Psoas muscle (tissue), 8 donors: ENCODE measurements at regions of chr16 and their contacts with region 1.

Region 1: DNA sequence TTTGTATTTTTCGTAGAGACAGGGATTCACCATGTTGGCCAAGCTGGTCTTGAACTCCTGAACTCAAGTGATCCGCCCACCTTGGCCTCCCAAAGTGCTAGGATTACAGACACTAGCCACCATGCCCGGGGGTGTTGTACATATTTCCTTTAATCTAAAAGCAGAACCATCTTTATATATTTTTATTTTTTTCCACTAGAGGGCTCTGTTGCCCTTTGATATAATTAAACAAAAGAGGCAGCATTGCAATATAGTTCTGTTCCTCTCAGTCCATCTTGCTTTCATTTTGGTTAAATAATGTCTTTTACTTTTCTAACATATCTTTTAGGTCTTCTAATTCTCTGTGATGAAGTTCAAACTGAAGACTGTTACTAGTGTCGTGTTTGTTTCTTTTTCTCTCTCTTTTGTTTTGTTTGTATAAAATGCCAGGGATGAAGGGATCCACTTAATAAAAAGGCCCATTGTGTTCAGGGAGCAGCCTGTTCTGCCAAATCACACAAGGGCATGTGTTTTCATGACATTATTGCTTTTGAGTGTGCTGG is 23.4 kb downstream of the WWOX start:
- DNase-seq: peak in 1 of 2 donors; percentile 19
- ATAC-seq: peak; percentile 53 to 89 (median 64)
- H3K4me3 ChIP-seq: no peak overlapping the region
- H3K27ac ChIP-seq: no peak overlapping the region
- H3K4me1 ChIP-seq: peaks cover 10% of the 10 kb centered on the region
- H3K27me3 ChIP-seq: no peaks in the 10 kb centered on the region
- CTCF ChIP-seq: peak; percentile 61

Region 2: GRCh38 chr16:77387815-77388209 is 735.0 kb before region 1 on chr16:
- intact Hi-C with region 1: no loop called
- DNase-seq: no peak
- ATAC-seq: no peak
- H3K4me3 ChIP-seq: no peak overlapping the region
- H3K27ac ChIP-seq: no peak overlapping the region
- H3K4me1 ChIP-seq: no peaks in the 10 kb centered on the region
- H3K27me3 ChIP-seq: no peaks in the 10 kb centered on the region
- CTCF ChIP-seq: no peak

Region 3: DNA sequence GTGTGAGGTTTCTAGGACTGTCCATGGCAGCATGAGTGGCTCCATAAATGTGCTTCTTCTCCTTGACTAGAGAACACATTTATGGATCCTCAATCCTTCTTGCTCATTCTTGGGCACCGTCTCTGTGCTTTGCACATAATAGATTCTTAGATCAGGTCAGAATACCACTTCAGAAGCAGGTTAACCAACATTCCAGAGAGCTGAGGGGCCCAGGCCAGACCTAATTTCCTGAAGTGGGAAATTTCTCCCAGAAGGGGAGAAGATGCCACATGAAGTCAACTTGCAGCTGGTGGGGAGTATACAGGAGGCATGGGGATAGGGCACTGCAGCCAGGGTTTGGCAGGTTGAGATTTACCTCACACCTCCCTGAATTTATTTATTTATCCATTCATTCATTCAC is 358.9 kb before region 1 on chr16:
- intact Hi-C with region 1: no loop called
- DNase-seq: no peak
- ATAC-seq: no peak
- H3K4me3 ChIP-seq: no peak overlapping the region
- H3K27ac ChIP-seq: no peak overlapping the region
- H3K4me1 ChIP-seq: no peaks in the 10 kb centered on the region
- H3K27me3 ChIP-seq: no peaks in the 10 kb centered on the region
- CTCF ChIP-seq: no peak

Region 4: DNA sequence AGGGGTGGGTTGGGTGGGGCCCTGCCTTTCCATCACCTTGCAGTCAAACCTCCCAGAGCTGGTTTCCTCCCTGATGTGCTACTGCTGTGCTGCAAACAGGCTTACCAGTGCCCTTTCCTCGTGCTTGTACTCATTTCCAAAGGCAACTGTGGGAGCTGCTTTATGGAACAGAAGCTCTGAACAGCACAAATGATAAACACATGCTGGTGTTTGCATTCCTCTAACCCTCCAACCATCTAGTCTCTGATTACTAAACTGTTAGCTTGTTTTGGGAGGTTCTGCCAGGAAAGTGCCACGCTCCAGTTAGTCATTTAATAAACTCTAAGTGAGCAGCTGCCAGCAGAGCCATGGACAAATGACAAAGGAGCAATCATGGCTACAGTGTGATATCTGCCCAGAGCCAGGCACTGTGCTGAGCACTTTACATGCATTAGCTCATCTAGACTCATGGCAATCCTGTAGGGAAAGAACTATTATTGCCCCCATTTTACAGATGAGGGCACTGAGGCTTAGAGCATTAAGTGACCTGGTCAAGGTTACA is 224.1 kb before region 1 on chr16:
- intact Hi-C with region 1: no loop called
- DNase-seq: no peak
- ATAC-seq: no peak
- H3K4me3 ChIP-seq: no peak overlapping the region
- H3K27ac ChIP-seq: no peak overlapping the region
- H3K4me1 ChIP-seq: no peaks in the 10 kb centered on the region
- H3K27me3 ChIP-seq: no peaks in the 10 kb centered on the region
- CTCF ChIP-seq: no peak

Region 5: DNA sequence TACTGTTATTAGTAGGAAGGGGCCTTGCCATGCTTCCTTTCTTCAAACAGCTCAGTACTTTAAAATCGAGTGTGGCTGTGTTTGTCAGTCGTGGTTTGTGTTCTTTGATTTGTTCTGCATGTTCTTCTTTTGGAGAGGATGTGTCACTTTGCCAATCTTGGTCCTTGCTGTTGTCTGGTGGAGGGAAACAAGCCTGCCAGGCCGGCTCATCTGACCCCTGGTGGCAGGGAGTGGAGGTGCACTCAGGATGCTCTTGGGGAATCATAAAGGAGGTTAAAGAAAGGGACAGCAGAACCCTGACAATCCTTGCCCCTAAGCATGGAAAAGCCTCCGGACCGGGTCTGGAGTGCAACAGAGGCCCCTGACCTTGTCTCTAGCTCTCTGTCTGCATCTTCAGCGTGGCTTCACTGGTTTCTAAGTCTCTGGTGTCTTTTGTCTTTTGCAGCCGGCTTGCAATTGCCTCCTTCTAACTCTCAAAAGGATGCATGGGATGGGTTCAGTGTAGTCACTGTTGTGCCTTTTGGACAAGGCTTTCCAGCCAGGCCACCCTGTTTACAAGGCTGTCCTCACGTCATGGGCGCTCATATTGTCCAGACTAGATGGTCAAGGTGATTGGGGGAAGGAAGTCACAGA is 112.4 kb after region 1 on chr16:
- intact Hi-C with region 1: loop called in 1 of 2 experiments (anchors 5 kb)
- DNase-seq: peak; percentile 51 to 60
- ATAC-seq: peak in 2 of 4 donors; percentile 48 to 61
- H3K4me3 ChIP-seq: no peak overlapping the region
- H3K27ac ChIP-seq: no peak overlapping the region
- H3K4me1 ChIP-seq: no peaks in the 10 kb centered on the region
- H3K27me3 ChIP-seq: no peaks in the 10 kb centered on the region
- CTCF ChIP-seq: peak; percentile 71

Region 6: DNA sequence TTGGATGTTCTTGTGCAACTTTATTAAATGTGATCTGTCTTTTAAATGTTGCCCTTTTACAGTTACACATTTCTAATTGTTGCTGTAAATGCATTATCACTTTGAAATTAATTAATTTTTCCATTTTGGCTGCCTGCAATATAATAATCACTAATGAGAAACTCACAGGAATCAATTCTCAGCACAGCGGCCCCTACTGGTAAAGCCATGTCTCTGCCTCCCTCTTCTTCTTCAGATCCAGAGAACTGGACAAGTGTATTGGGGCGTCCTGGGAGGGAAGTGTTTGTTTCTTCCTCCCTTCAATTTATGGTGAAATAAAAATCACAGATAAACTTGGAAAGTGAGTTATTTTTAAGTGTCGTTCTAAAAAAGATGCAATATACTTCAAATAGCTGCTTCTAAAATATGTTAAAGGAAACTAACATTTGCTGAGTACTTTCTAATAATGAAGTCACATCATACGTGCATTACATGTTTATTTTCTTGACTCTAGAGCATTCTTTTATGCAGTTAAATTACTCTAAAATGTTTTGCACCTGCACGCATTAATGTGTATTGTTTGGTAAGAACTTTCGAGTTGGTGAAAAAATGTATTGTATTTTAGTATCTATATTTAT is 314.6 kb after region 1 on chr16:
- intact Hi-C with region 1: loop called (anchors 5 kb)
- DNase-seq: no peak
- ATAC-seq: no peak
- H3K4me3 ChIP-seq: no peak overlapping the region
- H3K27ac ChIP-seq: no peak overlapping the region
- H3K4me1 ChIP-seq: no peaks in the 10 kb centered on the region
- H3K27me3 ChIP-seq: no peaks in the 10 kb centered on the region
- CTCF ChIP-seq: peak; percentile 77

Region 7: GRCh38 chr16:78443542-78444364 is 320.9 kb after region 1 on chr16:
- intact Hi-C with region 1: loop called (anchors 5 kb)
- DNase-seq: no peak
- ATAC-seq: no peak
- H3K4me3 ChIP-seq: peak overlapping the region; percentile 7
- H3K27ac ChIP-seq: no peak overlapping the region
- H3K4me1 ChIP-seq: no peaks in the 10 kb centered on the region
- H3K27me3 ChIP-seq: no peaks in the 10 kb centered on the region
- CTCF ChIP-seq: no peak

Region 8: GRCh38 chr16:78461496-78462191 is 338.8 kb after region 1 on chr16:
- intact Hi-C with region 1: no loop called
- DNase-seq: no peak
- ATAC-seq: no peak
- H3K4me3 ChIP-seq: no peak overlapping the region
- H3K27ac ChIP-seq: no peak overlapping the region
- H3K4me1 ChIP-seq: no peaks in the 10 kb centered on the region
- H3K27me3 ChIP-seq: no peaks in the 10 kb centered on the region
- CTCF ChIP-seq: no peak

Region 9: GRCh38 chr16:78490847-78491246 is 368.0 kb after region 1 on chr16:
- intact Hi-C with region 1: loop called in 1 of 2 experiments (anchors 10 kb)
- DNase-seq: peak; percentile 56 to 84
- ATAC-seq: peak; percentile 97 to 99 (median 99)
- H3K4me3 ChIP-seq: peak overlapping the region; percentile 48
- H3K27ac ChIP-seq: peak overlapping the region; percentile 70
- H3K4me1 ChIP-seq: no peaks in the 10 kb centered on the region
- H3K27me3 ChIP-seq: no peaks in the 10 kb centered on the region
- CTCF ChIP-seq: no peak